Dorsolateral prefrontal cortex (tissue), 120 donors: ENCODE measurements at regions of chr17 and their contacts with region 1.

Region 1: DNA sequence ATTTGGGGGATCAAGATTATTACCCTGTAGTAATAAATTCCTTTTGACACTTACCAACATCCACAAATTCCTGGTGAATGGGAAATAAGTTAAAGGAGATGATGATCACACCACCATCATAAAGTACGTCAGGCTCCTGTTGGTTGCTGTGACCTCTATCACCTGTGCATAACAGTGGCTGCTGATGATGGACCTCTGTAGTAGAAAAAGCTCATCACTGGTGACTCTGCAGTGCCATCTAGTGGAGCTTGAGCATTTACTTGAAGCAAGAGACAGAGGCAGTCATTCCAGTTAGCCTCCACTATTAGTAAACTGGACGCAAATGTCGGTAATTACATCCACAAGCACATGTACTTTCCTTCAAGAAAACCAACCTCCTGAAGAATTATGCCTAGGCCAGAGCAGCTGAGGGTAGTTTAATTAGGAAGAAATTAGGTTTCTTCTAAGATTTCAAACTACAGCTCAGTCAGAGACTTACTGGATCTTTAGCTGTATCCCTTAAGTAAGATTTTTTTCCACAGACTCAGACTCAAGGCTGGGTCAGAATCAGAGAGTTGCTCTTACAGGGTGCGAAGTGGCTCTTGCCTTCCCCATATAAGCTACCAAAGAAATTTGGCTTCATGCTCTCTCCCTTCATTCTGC is 39.3 kb downstream of the CYB561 start:
- DNase-seq: peak in 5 of 10 donors; percentile 59 to 87 (median 73)
- H3K4me3 ChIP-seq: no peak overlapping the region
- H3K27ac ChIP-seq: peak overlapping the region in 3 of 59 donors; percentile 3 to 22 (median 21)
- H3K27me3 ChIP-seq: no peaks in the 10 kb centered on the region
- CTCF ChIP-seq: peak; percentile 76 to 97 (median 88)

Region 2: GRCh38 chr17:62671583-62672312 is 735.1 kb before region 1 on chr17:
- intact Hi-C with region 1: loop called in 1 of 2 experiments (anchors 10 kb)
- DNase-seq: no peak
- H3K4me3 ChIP-seq: no peak overlapping the region
- H3K27ac ChIP-seq: no peak overlapping the region
- H3K27me3 ChIP-seq: no peaks in the 10 kb centered on the region
- CTCF ChIP-seq: no peak

Region 3: GRCh38 chr17:62968445-62968923 is 438.3 kb before region 1 on chr17:
- intact Hi-C with region 1: loop called in 1 of 2 experiments (anchors 10 kb)
- DNase-seq: peak in 3 of 10 donors; percentile 21 to 60 (median 44)
- H3K4me3 ChIP-seq: peak overlapping the region; percentile 25 to 97 (median 86)
- H3K27ac ChIP-seq: peak overlapping the region in 24 of 59 donors; percentile 1 to 98 (median 28)
- H3K27me3 ChIP-seq: no peaks in the 10 kb centered on the region
- CTCF ChIP-seq: peak; percentile 65 to 94 (median 87)

Region 4: GRCh38 chr17:63082273-63082993 is 324.4 kb before region 1 on chr17:
- intact Hi-C with region 1: loop called (anchors 10 kb)
- DNase-seq: no peak
- H3K4me3 ChIP-seq: no peak overlapping the region
- H3K27ac ChIP-seq: no peak overlapping the region
- H3K27me3 ChIP-seq: no peaks in the 10 kb centered on the region
- CTCF ChIP-seq: peak in 55 of 56 donors; percentile 24 to 78 (median 58)

Region 5: GRCh38 chr17:63189082-63189481 is 217.7 kb before region 1 on chr17:
- intact Hi-C with region 1: loop called (anchors 10 kb)
- DNase-seq: no peak
- H3K4me3 ChIP-seq: no peak overlapping the region
- H3K27ac ChIP-seq: peak overlapping the region in 38 of 59 donors; percentile 4 to 94 (median 84)
- H3K27me3 ChIP-seq: no peaks in the 10 kb centered on the region
- CTCF ChIP-seq: no peak